ENCODE measurements at regions of chr10 and their contacts with region 1.

Region 1: DNA sequence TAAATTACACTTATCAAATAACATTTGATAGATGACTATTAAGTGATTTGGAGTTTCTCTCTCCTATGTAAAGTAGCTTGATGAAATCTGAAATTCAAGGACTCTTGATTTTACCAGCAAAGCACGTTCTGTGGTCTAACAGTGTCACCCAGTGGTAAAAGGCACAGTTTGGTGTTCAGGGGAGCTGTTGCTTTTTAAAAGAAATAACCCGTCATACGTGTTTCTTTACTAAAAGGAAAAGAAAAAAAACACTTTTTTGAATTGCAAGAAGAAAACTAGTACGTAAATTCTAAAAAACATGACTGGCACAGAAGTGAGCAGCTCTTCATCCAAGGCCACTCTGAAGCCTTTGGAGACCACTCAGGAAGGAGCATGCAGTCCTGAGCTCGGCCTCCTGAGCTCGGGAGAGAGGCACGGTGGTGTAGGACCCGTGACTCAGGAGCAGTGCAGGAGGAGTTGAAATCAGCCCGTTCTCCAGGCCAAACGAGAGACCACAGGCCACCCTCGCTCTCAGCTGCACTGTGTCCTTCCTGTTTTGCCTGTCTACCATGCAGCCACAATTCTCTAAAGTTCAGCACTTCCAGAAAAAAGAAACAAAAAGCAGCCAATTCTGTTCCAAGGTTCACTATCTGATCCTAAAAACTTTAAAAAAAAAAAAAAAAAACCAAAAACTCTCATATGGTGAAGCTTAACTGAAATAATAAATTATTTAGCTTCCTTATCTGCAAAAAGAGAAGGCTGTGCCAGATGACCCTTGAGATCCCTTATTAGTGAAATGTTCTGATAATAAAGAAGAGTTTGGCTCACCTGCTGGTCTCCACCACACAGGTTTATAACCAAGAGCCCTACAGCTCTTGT is 212.6 kb upstream of the FRMD4A start:
- DNase-seq: no peak
- ATAC-seq: peak; percentile 66
- H3K4me3 Mint-ChIP-seq: peak overlapping the region; percentile 67
- H3K27ac Mint-ChIP-seq: peak overlapping the region; percentile 82
- H3K4me1 Mint-ChIP-seq: peaks cover 63% of the 10 kb centered on the region
- H3K27me3 Mint-ChIP-seq: no peaks in the 10 kb centered on the region

Region 2: GRCh38 chr10:14553448-14553847 is 10.2 kb after region 1 on chr10:
- POLR2A ChIA-PET with region 1: interaction called, 11 read pairs
- DNase-seq: no peak
- ATAC-seq: peak; percentile 59
- H3K4me3 Mint-ChIP-seq: peak overlapping the region; percentile 49
- H3K27ac Mint-ChIP-seq: peak overlapping the region; percentile 63
- H3K4me1 Mint-ChIP-seq: peaks cover 72% of the 10 kb centered on the region
- H3K27me3 Mint-ChIP-seq: no peaks in the 10 kb centered on the region

Region 3: DNA sequence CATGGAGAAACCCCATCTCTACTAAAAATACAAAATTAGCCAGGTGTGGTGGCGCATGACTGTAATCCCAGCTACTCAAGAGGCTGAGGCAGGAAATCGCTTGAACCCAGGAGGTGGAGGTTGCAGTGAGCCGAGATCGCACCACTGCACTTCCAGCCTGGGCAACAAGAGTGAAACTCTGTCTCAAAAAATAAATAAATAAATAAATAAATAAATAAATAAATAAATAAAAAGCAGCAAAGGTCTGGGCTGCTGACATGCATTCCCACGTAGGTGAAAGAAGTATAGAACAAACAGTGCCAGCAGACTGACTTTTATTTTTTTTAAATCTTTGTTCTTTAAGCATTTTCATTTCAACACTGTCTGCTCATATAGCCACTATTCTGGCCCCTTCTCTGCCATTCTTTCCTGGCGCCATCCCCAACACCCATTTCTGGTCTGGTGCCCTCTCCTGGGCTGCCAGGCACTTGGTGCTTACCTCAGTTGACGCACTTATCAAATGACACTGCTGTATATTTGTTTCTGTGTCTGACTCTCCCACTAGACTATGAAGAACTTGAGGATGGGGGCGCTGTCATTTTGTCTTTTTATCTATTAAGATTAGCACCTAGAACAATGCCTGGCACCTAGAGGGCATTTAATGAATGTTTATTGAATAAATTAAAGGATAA is 215.9 kb after region 1 on chr10:
- POLR2A ChIA-PET with region 1: no interaction called
- DNase-seq: no peak
- ATAC-seq: no peak
- H3K4me3 Mint-ChIP-seq: no peak overlapping the region
- H3K27ac Mint-ChIP-seq: no peak overlapping the region
- H3K4me1 Mint-ChIP-seq: peaks cover 2% of the 10 kb centered on the region
- H3K27me3 Mint-ChIP-seq: peaks cover 6% of the 10 kb centered on the region